ENCODE measurements at regions of chr1 and their contacts with region 1.

Region 1: DNA sequence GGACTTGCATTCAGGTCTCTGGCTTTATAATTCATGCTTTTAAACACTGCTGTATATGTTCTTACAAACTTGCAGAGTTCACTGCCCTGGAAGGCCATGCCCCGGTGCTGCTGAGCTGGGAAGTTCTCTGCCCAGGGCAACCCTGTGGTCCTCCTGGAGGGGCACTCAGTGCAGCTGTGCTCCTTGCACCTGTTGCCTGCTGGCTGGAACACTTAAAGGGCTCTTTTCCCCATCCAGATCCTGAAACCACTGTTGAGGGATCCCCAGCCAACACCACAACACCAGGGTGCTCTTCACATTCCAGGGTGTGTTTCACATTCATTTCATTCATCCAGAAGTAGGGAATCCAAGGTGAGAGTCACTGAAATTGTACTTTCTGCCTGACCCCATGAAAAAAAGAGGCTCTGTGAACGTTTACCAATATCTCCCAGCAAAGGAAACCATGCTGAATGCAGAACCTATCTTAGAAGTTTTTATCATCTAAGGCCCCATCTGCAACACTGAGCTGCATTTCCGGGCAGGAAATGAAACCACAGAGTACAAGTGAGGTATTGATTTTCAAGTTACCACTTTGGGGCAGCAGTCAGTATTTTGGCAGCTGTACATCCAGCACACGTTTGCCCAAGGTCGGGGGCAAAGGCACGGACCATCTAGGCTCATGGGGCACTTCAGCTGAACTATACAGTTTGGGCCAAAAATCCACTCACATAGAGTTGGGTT is 16.4 kb upstream of the KIAA0040 start:
- DNase-seq: peak; percentile 82
- ATAC-seq: peak; percentile 90
- H3K4me3 Mint-ChIP-seq: peak overlapping the region; percentile 70
- H3K27ac Mint-ChIP-seq: peak overlapping the region; percentile 99
- H3K4me1 Mint-ChIP-seq: peaks cover 51% of the 10 kb centered on the region
- H3K27me3 Mint-ChIP-seq: no peaks in the 10 kb centered on the region

Region 2: GRCh38 chr1:175124861-175125260 is 84.1 kb before region 1 on chr1:
- CTCF ChIA-PET with region 1: no interaction called
- DNase-seq: no peak
- ATAC-seq: no peak
- H3K4me3 Mint-ChIP-seq: no peak overlapping the region
- H3K27ac Mint-ChIP-seq: no peak overlapping the region
- H3K4me1 Mint-ChIP-seq: peaks cover 1% of the 10 kb centered on the region
- H3K27me3 Mint-ChIP-seq: peaks cover 4% of the 10 kb centered on the region

Region 3: DNA sequence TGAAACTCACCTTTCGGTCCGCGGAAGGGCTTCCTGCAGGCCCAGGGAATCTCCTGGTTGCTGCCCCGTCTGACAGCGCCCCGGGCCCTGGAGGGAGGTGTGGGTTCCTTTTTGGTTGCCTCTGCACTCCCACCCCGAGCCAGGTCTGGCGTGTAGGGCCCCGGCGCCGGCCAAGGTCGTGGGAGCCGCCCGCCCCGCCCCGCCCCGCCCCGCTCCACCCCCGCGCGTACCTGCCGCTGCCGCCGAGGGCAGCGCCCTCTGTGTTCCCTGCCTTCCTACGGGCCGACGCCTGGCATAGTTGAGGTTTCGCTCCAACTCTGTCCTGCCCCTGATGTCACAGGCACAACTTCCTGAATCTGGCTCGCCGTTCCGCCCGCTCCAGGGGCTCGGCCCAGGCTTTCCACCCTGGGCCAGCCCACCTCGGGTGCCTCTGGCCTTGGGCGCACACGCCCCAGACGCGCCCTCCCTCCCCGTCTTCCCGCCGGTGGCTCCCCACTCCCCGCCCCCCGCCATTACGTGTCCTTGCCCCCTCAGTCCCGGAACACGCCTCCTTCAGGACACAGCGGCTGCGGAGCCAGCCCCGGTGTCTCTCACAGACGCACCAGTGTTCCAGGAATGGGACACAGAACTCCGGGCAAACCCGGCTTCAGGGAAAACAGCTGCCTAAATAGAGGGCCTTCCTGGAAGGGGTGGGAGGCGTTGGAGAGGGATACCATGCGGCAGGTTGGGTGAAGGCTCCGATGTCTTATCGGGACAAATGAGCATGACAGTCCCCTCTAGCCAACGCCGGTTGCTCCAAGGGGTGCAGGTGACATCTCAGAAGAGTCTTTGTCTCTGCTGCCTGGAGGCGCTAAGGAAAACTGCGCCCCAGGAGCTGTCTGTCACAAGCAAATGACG is 16.1 kb before region 1 on chr1 and contains the start of gene KIAA0040:
- CTCF ChIA-PET with region 1: interaction called, 43 read pairs
- DNase-seq: peak; percentile 73
- ATAC-seq: peak; percentile 73
- H3K4me3 Mint-ChIP-seq: peak within 1 kb of the TSS; percentile 95
- H3K27ac Mint-ChIP-seq: peak within 1 kb of the TSS; percentile 86
- H3K4me1 Mint-ChIP-seq: peaks cover 49% of the 10 kb centered on the region
- H3K27me3 Mint-ChIP-seq: no peaks in the 10 kb centered on the region
- total RNA-seq, gene KIAA0040: 54.8 to 64.3 TPM

Region 4: GRCh38 chr1:175319418-175320230 is 110.7 kb after region 1 on chr1:
- CTCF ChIA-PET with region 1: interaction called, 18 read pairs
- DNase-seq: peak; percentile 78
- ATAC-seq: peak; percentile 93
- H3K4me3 Mint-ChIP-seq: no peak overlapping the region
- H3K27ac Mint-ChIP-seq: no peak overlapping the region
- H3K4me1 Mint-ChIP-seq: peaks cover 6% of the 10 kb centered on the region
- H3K27me3 Mint-ChIP-seq: peaks cover 6% of the 10 kb centered on the region

Region 5: GRCh38 chr1:175394739-175395138 is 185.8 kb after region 1 on chr1:
- CTCF ChIA-PET with region 1: no interaction called
- DNase-seq: no peak
- ATAC-seq: no peak
- H3K4me3 Mint-ChIP-seq: no peak overlapping the region
- H3K27ac Mint-ChIP-seq: no peak overlapping the region
- H3K4me1 Mint-ChIP-seq: no peaks in the 10 kb centered on the region
- H3K27me3 Mint-ChIP-seq: peaks cover 40% of the 10 kb centered on the region

Region 6: DNA sequence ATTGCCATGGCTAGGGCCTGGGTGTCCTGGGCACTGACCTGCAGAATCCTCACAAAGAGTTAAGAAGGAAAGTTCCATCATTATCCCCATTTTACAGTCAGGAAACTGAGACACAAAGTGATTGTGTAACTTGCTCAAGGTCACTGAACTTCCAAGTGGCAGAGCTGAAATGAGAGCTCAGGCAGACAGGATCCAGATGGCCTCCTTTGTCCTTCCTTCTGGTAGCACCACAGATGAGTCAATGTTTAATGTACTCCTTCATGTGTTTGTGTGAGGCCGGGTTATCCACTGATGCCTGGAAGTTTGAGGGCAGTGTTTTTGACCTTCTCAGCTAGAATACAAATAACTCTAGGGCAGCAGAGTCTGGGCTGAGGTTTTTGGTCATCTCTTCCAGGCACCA is 327.4 kb after region 1 on chr1:
- CTCF ChIA-PET with region 1: no interaction called
- DNase-seq: no peak
- ATAC-seq: no peak
- H3K4me3 Mint-ChIP-seq: no peak overlapping the region
- H3K27ac Mint-ChIP-seq: no peak overlapping the region
- H3K4me1 Mint-ChIP-seq: no peaks in the 10 kb centered on the region
- H3K27me3 Mint-ChIP-seq: peaks cover 20% of the 10 kb centered on the region

Measured in activated CD8-positive, alpha-beta memory T cell treated with anti-CD3 and anti-CD28 coated beads, Interleukin-2, amount 10 ng/mL, durations not matched to agents 7 days and 5 days (primary cell).